Caco-2 (cell line): ENCODE measurements at regions of chr12 and their contacts with region 1.

Region 1: DNA sequence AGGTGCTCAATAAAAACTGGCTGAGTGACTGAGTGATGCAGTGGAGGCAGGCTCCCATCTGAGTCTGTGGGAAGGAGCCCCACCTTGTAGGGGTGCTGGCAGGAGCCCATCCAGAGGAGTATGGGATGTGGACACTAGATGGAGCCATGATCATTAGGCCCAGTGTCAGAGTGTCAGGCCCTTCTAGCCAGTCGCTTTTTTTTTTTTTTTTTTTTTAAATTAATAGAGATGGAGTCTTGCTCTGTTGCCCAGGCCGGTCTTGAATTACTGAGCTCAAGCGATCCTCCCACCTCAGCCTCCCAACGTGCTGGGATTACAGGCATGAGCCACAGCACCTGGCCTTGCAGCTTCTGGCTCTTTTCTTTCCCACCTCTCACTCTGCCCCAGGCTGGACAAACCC is 11.5 kb downstream of the RITA1 start:
- DNase-seq: peak; percentile 81 to 83
- H3K4me3 ChIP-seq: no peak overlapping the region
- H3K4me3 Mint-ChIP-seq: no peak overlapping the region
- H3K27ac Mint-ChIP-seq: no peak overlapping the region
- H3K4me1 ChIP-seq: peaks cover 4% of the 10 kb centered on the region; the same call in 1 of the 2 replicates
- H3K4me1 Mint-ChIP-seq: peaks cover 7% of the 10 kb centered on the region
- H3K27me3 ChIP-seq: no peaks in the 10 kb centered on the region
- H3K27me3 Mint-ChIP-seq: no peaks in the 10 kb centered on the region
- CTCF ChIP-seq: peak; percentile 66 to 86

Region 2: GRCh38 chr12:113230315-113231234 is 33.6 kb after region 1 on chr12:
- CTCF ChIA-PET with region 1: interaction called, 17 read pairs
- POLR2A ChIA-PET with region 1: interaction called, 4 read pairs
- intact Hi-C with region 1: no loop called
- DNase-seq: peak; percentile 79 to 85
- H3K4me3 ChIP-seq: no peak overlapping the region
- H3K4me3 Mint-ChIP-seq: peak overlapping the region; percentile 47
- H3K27ac Mint-ChIP-seq: peak overlapping the region; percentile 95
- H3K4me1 ChIP-seq: peaks cover 64% of the 10 kb centered on the region
- H3K4me1 Mint-ChIP-seq: peaks cover 38% of the 10 kb centered on the region
- H3K27me3 ChIP-seq: no peaks in the 10 kb centered on the region
- H3K27me3 Mint-ChIP-seq: no peaks in the 10 kb centered on the region
- CTCF ChIP-seq: no peak

Region 3: GRCh38 chr12:113271853-113272561 is 75.0 kb after region 1 on chr12:
- CTCF ChIA-PET with region 1: no interaction called
- POLR2A ChIA-PET with region 1: no interaction called
- intact Hi-C with region 1: loop called (anchors 5 kb)
- DNase-seq: peak in 1 of 2 experiments; percentile 35
- H3K4me3 ChIP-seq: no peak overlapping the region
- H3K4me3 Mint-ChIP-seq: no peak overlapping the region
- H3K27ac Mint-ChIP-seq: peak overlapping the region; percentile 81
- H3K4me1 ChIP-seq: peaks cover 12% of the 10 kb centered on the region
- H3K4me1 Mint-ChIP-seq: peaks cover 8% of the 10 kb centered on the region
- H3K27me3 ChIP-seq: no peaks in the 10 kb centered on the region
- H3K27me3 Mint-ChIP-seq: no peaks in the 10 kb centered on the region
- CTCF ChIP-seq: no peak

Region 4: GRCh38 chr12:113358381-113359132 is 161.6 kb after region 1 on chr12 and contains the start of gene PLBD2:
- CTCF ChIA-PET with region 1: no interaction called
- POLR2A ChIA-PET with region 1: no interaction called
- intact Hi-C with region 1: loop called (anchors 5 kb)
- DNase-seq: peak; percentile 94 to 95
- H3K4me3 ChIP-seq: peak within 1 kb of the TSS; percentile 76
- H3K4me3 Mint-ChIP-seq: peak within 1 kb of the TSS; percentile 78
- H3K27ac Mint-ChIP-seq: peak within 1 kb of the TSS; percentile 14
- H3K4me1 ChIP-seq: peaks cover 10% of the 10 kb centered on the region
- H3K4me1 Mint-ChIP-seq: peaks cover 13% of the 10 kb centered on the region
- H3K27me3 ChIP-seq: no peaks in the 10 kb centered on the region
- H3K27me3 Mint-ChIP-seq: no peaks in the 10 kb centered on the region
- CTCF ChIP-seq: no peak
- total RNA-seq, gene PLBD2: 41.1 and 43.1 TPM in 2 replicates